Dendritic cell treated with granulocyte-macrophage colony-stimulating factor and Interleukin-4, amounts not matched to agents 40 ng/mL and 50 ng/mL, for 4 days (primary cell): ENCODE measurements at regions of chr1 and their contacts with region 1.

Region 1: GRCh38 chr1:114729782-114730181 is 13.2 kb upstream of the NRAS start:
- H3K4me3 Mint-ChIP-seq: no peak overlapping the region
- H3K27ac Mint-ChIP-seq: no peak overlapping the region
- H3K4me1 Mint-ChIP-seq: no peaks in the 10 kb centered on the region
- H3K27me3 Mint-ChIP-seq: no peaks in the 10 kb centered on the region

Region 2: GRCh38 chr1:114745291-114745690 is 15.5 kb after region 1 on chr1:
- intact Hi-C with region 1: loop called (anchors 2 kb)
- H3K4me3 Mint-ChIP-seq: no peak overlapping the region
- H3K27ac Mint-ChIP-seq: no peak overlapping the region
- H3K4me1 Mint-ChIP-seq: peaks cover 41% of the 10 kb centered on the region
- H3K27me3 Mint-ChIP-seq: no peaks in the 10 kb centered on the region